Left colon (tissue), 2 donors: ENCODE measurements at regions of chr5 and their contacts with region 1.

Region 1: GRCh38 chr5:52799983-52800393 is 12.3 kb downstream of the ITGA1 start:
- DNase-seq: peak; percentile 96
- ATAC-seq: peak; percentile 93

Region 2: GRCh38 chr5:52893105-52893504 is 93.1 kb after region 1 on chr5:
- intact Hi-C with region 1: loop called in 1 of 2 experiments (anchors 10 kb)
- DNase-seq: no peak
- ATAC-seq: peak; percentile 58